ENCODE measurements at regions of chr22 and their contacts with region 1.

Region 1: GRCh38 chr22:43230971-43231723 is 44.2 kb upstream of the TTLL12 start:
- DNase-seq: peak; percentile 44 to 79 (median 66)
- ATAC-seq: peak; percentile 84
- H3K4me3 ChIP-seq: no peak overlapping the region
- H3K4me3 Mint-ChIP-seq: no peak overlapping the region
- H3K27ac ChIP-seq: no peak overlapping the region
- H3K27ac Mint-ChIP-seq: no peak overlapping the region
- H3K4me1 ChIP-seq: no peaks in the 10 kb centered on the region
- H3K4me1 Mint-ChIP-seq: peaks cover 5% of the 10 kb centered on the region
- H3K27me3 ChIP-seq: no peaks in the 10 kb centered on the region
- H3K27me3 Mint-ChIP-seq: no peaks in the 10 kb centered on the region
- CTCF ChIP-seq: peak; percentile 99

Region 2: GRCh38 chr22:42786606-42787356 is 444.4 kb before region 1 on chr22:
- CTCF ChIA-PET with region 1: no interaction called
- POLR2A ChIA-PET with region 1: no interaction called
- intact Hi-C with region 1: loop called in 1 of 2 experiments (anchors 5 kb)
- DNase-seq: no peak
- ATAC-seq: no peak
- H3K4me3 ChIP-seq: no peak overlapping the region
- H3K4me3 Mint-ChIP-seq: no peak overlapping the region
- H3K27ac ChIP-seq: no peak overlapping the region
- H3K27ac Mint-ChIP-seq: no peak overlapping the region
- H3K4me1 ChIP-seq: no peaks in the 10 kb centered on the region
- H3K4me1 Mint-ChIP-seq: no peaks in the 10 kb centered on the region
- H3K27me3 ChIP-seq: no peaks in the 10 kb centered on the region
- H3K27me3 Mint-ChIP-seq: no peaks in the 10 kb centered on the region
- CTCF ChIP-seq: no peak

Region 3: DNA sequence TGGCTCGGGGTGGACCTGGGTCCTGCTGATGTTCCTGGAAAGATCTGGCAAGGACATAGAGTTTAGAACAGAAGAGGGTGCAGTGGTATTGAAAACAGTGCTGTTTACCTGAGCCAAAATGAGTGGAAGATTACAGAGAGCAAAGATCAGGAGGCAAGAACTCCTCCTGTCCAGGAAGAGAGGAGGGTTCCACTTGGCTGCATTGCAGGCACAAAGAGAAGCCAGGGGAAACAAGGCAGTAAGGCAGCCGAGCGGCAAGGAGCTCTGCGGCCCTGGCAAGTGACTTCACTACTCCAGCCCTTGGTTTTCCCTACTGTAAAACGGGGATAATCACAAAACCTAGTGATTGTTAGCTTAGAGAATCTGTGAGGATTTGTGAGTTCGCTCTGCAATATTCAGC is 212.5 kb before region 1 on chr22:
- CTCF ChIA-PET with region 1: no interaction called
- POLR2A ChIA-PET with region 1: no interaction called
- intact Hi-C with region 1: no loop called
- DNase-seq: no peak
- ATAC-seq: no peak
- H3K4me3 ChIP-seq: no peak overlapping the region
- H3K4me3 Mint-ChIP-seq: no peak overlapping the region
- H3K27ac ChIP-seq: no peak overlapping the region
- H3K27ac Mint-ChIP-seq: no peak overlapping the region
- H3K4me1 ChIP-seq: peaks cover 10% of the 10 kb centered on the region
- H3K4me1 Mint-ChIP-seq: peaks cover 15% of the 10 kb centered on the region
- H3K27me3 ChIP-seq: no peaks in the 10 kb centered on the region
- H3K27me3 Mint-ChIP-seq: no peaks in the 10 kb centered on the region
- CTCF ChIP-seq: no peak

Region 4: GRCh38 chr22:43273902-43274484 is 42.8 kb after region 1 on chr22:
- CTCF ChIA-PET with region 1: interaction called, 8 read pairs
- POLR2A ChIA-PET with region 1: no interaction called
- intact Hi-C with region 1: loop called in 1 of 2 experiments (anchors 1 kb)
- DNase-seq: peak in 6 of 9 experiments; percentile 25 to 73 (median 46)
- ATAC-seq: peak; percentile 54
- H3K4me3 ChIP-seq: no peak overlapping the region
- H3K4me3 Mint-ChIP-seq: no peak overlapping the region
- H3K27ac ChIP-seq: no peak overlapping the region
- H3K27ac Mint-ChIP-seq: no peak overlapping the region
- H3K4me1 ChIP-seq: no peaks in the 10 kb centered on the region
- H3K4me1 Mint-ChIP-seq: no peaks in the 10 kb centered on the region
- H3K27me3 ChIP-seq: no peaks in the 10 kb centered on the region
- H3K27me3 Mint-ChIP-seq: peaks cover 2% of the 10 kb centered on the region
- CTCF ChIP-seq: peak; percentile 47

Region 5: DNA sequence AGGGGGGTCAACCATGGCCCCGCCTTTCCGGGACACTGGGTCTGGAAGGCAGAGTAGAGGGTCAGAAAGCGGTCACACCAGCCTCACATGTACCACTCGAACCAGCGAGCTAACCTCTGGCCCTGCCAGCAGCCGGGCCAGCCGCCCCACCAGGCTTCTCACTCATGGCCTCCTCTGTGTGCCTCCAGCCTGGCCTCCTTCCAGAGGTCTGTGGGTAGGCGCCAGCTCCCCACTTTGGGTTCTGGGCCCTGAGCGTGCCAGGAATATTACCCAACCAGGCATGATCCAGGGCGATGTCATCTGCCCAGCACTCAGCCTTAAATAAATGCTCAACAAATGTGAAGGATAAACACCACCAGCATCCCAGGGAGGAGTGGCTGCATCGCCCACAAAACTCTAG is 106.2 kb after region 1 on chr22:
- CTCF ChIA-PET with region 1: interaction called, 12 read pairs
- POLR2A ChIA-PET with region 1: no interaction called
- intact Hi-C with region 1: no loop called
- DNase-seq: no peak
- ATAC-seq: no peak
- H3K4me3 ChIP-seq: no peak overlapping the region
- H3K4me3 Mint-ChIP-seq: no peak overlapping the region
- H3K27ac ChIP-seq: no peak overlapping the region
- H3K27ac Mint-ChIP-seq: no peak overlapping the region
- H3K4me1 ChIP-seq: no peaks in the 10 kb centered on the region
- H3K4me1 Mint-ChIP-seq: peaks cover 5% of the 10 kb centered on the region
- H3K27me3 ChIP-seq: peaks cover 8 to 12% of the 10 kb centered on the region in 2 experiments
- H3K27me3 Mint-ChIP-seq: peaks cover 23% of the 10 kb centered on the region
- CTCF ChIP-seq: no peak

Region 6: GRCh38 chr22:43377896-43378704 is 147.0 kb after region 1 on chr22:
- CTCF ChIA-PET with region 1: interaction called, 43 read pairs
- POLR2A ChIA-PET with region 1: no interaction called
- intact Hi-C with region 1: no loop called
- DNase-seq: peak in 2 of 9 experiments; percentile 18 to 40
- ATAC-seq: no peak
- H3K4me3 ChIP-seq: no peak overlapping the region
- H3K4me3 Mint-ChIP-seq: peak overlapping the region; percentile 23
- H3K27ac ChIP-seq: no peak overlapping the region
- H3K27ac Mint-ChIP-seq: no peak overlapping the region
- H3K4me1 ChIP-seq: peaks cover 22% of the 10 kb centered on the region
- H3K4me1 Mint-ChIP-seq: peaks cover 23% of the 10 kb centered on the region
- H3K27me3 ChIP-seq: peaks cover 10 to 24% of the 10 kb centered on the region in 2 experiments
- H3K27me3 Mint-ChIP-seq: peaks cover 33% of the 10 kb centered on the region
- CTCF ChIP-seq: no peak

Region 7: DNA sequence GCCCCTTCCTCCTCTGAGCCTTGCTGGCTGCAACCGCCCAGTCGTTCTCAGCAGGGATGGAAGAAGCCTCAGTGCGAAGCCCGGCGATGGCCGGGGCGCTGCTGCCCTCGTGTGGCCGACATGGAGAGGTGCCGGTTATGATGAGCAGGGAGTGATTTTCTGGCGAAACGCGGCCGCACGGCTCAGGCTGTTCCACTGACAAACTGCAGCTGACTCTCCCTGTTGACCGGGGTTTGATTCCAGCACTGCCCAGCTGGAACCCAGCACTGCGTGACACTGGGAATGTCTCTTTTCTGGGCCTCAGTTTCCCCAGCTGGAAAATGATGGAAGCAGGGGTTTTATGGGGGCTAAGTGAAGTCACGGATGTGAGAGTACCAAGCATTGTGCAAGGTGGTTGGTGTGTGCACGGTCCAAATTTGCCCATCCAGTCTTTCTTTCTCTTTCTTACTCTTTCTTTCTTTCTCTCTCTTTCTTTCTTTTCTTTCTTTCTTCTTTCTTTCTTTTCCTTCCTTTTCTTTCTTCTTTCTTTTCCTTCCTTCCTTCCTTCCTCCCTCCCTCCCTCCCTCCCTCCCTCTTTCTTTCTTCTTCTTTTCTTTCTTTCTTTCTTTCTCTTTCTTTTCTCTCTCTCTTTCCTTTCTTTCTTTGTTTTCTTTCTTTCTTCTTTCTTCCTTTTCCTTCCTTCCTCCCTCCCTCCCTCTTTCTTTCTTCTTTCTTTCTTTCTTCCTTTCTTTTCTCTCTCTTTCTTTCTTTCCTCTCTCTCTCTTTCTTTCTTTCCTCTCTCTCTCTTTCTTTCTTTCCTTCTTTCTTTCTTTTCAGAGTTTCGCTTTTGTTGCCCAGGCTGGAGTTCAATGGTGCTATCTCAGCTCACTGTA is 154.9 kb after region 1 on chr22:
- CTCF ChIA-PET with region 1: interaction called, 43 read pairs
- POLR2A ChIA-PET with region 1: no interaction called
- intact Hi-C with region 1: loop called in 1 of 2 experiments (anchors 1 kb)
- DNase-seq: peak; percentile 46 to 85 (median 73)
- ATAC-seq: peak; percentile 82
- H3K4me3 ChIP-seq: no peak overlapping the region
- H3K4me3 Mint-ChIP-seq: no peak overlapping the region
- H3K27ac ChIP-seq: no peak overlapping the region
- H3K27ac Mint-ChIP-seq: no peak overlapping the region
- H3K4me1 ChIP-seq: peaks cover 4% of the 10 kb centered on the region
- H3K4me1 Mint-ChIP-seq: peaks cover 7% of the 10 kb centered on the region
- H3K27me3 ChIP-seq: peaks cover 7 to 14% of the 10 kb centered on the region in 2 experiments
- H3K27me3 Mint-ChIP-seq: peaks cover 18% of the 10 kb centered on the region
- CTCF ChIP-seq: peak; percentile 58